MCF 10A (cell line): ENCODE measurements at regions of chr15 and their contacts with region 1.

Region 1: DNA sequence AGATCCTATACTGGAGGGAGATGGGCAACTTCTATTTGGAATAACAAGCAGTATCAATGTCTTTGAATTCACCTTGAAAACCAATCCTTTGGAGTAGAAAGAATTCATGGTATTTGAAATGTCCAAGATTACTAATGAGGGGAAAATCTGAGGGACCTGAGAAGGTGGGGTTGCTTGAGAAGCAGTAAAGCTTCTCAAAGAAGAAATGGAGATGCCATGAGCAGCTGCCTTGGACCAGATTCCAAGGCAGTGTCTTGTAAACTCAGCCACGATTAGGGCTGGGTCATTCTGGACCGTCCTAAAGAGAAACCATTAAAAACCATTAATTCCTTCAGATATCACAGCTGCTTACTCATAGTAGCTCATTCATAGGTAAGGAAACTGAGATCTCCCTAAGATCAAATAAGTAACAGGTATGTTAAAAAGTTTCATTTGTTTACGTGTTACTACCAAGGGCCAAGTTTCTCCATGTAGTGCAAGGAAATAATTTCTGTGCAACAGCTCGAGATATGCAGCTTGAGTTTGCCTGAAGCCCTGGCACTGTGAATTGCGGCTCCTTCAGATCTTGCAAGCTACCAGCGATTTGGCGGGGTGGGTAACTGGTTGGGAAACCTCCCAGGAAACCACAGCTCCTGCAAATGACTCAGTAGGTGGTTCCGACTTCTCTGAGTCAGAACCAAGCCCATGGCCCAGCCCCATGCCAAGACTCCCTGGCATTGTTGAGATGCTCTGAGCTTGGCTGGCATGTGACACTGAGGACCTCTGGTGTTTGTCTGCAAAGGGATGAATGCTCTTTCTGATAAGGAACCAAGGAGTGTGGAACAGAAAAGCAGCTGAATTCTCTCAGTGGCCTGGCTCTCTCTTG is 296.8 kb downstream of the RORA start:
- DNase-seq: peak; percentile 98
- H3K4me3 Mint-ChIP-seq: no peak overlapping the region
- H3K27ac Mint-ChIP-seq: no peak overlapping the region
- H3K4me1 Mint-ChIP-seq: peaks cover 29% of the 10 kb centered on the region
- H3K27me3 Mint-ChIP-seq: peaks cover 40% of the 10 kb centered on the region
- CTCF ChIP-seq: peak; percentile 67

Region 2: GRCh38 chr15:60520825-60521368 is 411.4 kb before region 1 on chr15:
- CTCF ChIA-PET with region 1: interaction called, 9 read pairs
- POLR2A ChIA-PET with region 1: interaction called, 5 read pairs
- intact Hi-C with region 1: loop called (anchors 5 kb)
- DNase-seq: peak; percentile 75
- H3K4me3 Mint-ChIP-seq: no peak overlapping the region
- H3K27ac Mint-ChIP-seq: peak overlapping the region; percentile 73
- H3K4me1 Mint-ChIP-seq: peaks cover 40% of the 10 kb centered on the region
- H3K27me3 Mint-ChIP-seq: no peaks in the 10 kb centered on the region
- CTCF ChIP-seq: peak; percentile 79

Region 3: DNA sequence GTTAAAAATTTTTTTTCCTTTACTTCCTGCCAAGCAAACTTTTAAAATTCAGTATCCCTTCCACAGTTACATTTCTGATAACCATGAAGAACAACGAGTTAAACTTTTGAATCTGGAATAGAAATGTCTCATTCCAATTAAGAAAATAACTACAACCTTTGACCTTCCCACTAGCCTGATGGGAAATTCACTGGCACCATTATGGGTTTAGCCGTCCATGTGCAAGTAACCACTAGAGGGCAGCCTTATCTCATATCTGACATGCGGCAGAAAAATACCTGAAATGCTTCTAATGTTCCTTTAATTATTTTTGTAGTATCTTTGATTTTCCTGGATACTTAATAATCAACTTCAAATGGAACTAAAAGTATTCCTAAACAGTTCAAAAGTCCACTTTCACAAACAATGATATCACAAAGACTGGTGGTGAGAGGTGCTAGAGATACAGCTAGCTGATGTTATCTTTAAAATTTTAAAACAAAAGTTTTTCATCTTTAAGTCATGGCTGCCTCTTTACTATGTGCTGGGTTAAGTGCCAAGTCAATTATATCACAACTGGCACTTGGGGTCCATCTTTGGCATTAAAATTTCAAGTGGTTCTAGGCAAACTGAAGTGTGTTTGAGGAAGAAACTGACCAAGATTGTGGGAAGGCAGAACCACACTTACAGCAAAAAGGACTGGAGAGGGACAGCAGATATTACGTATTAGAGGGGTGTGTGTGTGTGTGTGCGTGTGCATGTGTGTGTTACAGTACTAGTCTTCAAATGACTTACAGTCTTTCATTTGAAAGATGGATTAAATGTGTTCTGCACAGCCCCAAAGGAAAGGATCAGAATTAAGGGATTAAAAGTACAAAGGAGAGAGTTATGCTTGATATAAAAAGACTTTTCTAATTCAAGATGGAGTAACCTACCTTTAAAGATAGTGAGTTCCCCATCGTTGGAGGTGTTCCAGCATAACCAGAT is 346.3 kb before region 1 on chr15:
- CTCF ChIA-PET with region 1: interaction called, 73 read pairs
- POLR2A ChIA-PET with region 1: interaction called, 11 read pairs
- intact Hi-C with region 1: loop called (anchors 1 kb)
- DNase-seq: peak; percentile 75
- H3K4me3 Mint-ChIP-seq: no peak overlapping the region
- H3K27ac Mint-ChIP-seq: no peak overlapping the region
- H3K4me1 Mint-ChIP-seq: no peaks in the 10 kb centered on the region
- H3K27me3 Mint-ChIP-seq: no peaks in the 10 kb centered on the region
- CTCF ChIP-seq: peak; percentile 84

Region 4: GRCh38 chr15:60673918-60674558 is 258.2 kb before region 1 on chr15:
- CTCF ChIA-PET with region 1: interaction called, 8 read pairs
- POLR2A ChIA-PET with region 1: no interaction called
- intact Hi-C with region 1: loop called (anchors 1 kb)
- DNase-seq: peak; percentile 96
- H3K4me3 Mint-ChIP-seq: no peak overlapping the region
- H3K27ac Mint-ChIP-seq: peak overlapping the region; percentile 69
- H3K4me1 Mint-ChIP-seq: peaks cover 9% of the 10 kb centered on the region
- H3K27me3 Mint-ChIP-seq: peaks cover 10% of the 10 kb centered on the region
- CTCF ChIP-seq: no peak

Region 5: GRCh38 chr15:61051569-61052031 is 119.3 kb after region 1 on chr15:
- CTCF ChIA-PET with region 1: interaction called, 9 read pairs
- POLR2A ChIA-PET with region 1: interaction called, 3 read pairs
- intact Hi-C with region 1: loop called (anchors 1 kb)
- DNase-seq: peak; percentile 58
- H3K4me3 Mint-ChIP-seq: no peak overlapping the region
- H3K27ac Mint-ChIP-seq: no peak overlapping the region
- H3K4me1 Mint-ChIP-seq: peaks cover 23% of the 10 kb centered on the region
- H3K27me3 Mint-ChIP-seq: no peaks in the 10 kb centered on the region
- CTCF ChIP-seq: peak; percentile 56